CD4-positive, alpha-beta memory T cell (primary cell): ENCODE measurements at regions of chr9 and their contacts with region 1.

Region 1: DNA sequence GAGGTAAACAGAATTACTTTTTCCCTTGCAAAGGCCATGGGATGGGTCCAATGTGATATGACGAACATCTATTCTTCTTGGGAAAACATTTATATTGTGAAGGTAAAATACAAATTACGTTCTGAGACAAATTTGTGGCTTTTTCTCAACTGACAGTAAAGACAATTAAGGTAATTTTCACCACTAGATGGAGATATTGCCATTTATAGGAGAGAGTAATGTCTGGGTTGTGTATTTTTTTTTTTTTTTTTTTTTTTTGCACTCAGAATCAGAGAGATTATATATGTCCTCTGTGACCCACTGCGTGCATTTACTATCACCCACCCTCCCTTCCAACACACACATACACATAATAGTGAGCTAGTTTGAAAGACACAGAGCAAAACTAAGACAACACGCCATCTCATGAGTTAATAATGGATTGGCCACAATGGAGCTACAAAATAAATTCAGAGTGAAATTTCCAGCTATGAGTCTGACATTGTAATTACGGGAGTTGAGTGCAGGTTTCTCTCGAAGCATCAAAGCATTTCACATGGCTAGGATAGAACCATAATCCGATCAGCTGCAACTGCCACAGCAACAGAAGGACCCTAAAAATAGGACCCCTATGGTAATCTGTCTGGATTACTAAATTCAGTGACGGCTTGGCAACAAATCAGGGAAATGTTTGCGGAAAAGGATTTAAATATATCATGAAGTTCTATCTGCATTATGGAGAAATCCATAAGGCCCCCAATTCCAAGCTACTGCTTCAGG is 49.2 kb downstream of the ANXA1 start:
- DNase-seq: peak; percentile 15 to 40 (median 28)
- H3K4me3 ChIP-seq: no peak overlapping the region
- H3K4me3 Mint-ChIP-seq: no peak overlapping the region
- H3K27ac ChIP-seq: no peak overlapping the region
- H3K27ac Mint-ChIP-seq: peak overlapping the region in 1 of 7 donors; percentile 82
- H3K4me1 ChIP-seq: no peaks in the 10 kb centered on the region
- H3K4me1 Mint-ChIP-seq: peaks cover 0 to 2% (median 0%) of the 10 kb centered on the region in 4 donors
- H3K27me3 ChIP-seq: no peaks in the 10 kb centered on the region
- H3K27me3 Mint-ChIP-seq: peaks cover 5 to 17% of the 10 kb centered on the region in 2 donors

Region 2: DNA sequence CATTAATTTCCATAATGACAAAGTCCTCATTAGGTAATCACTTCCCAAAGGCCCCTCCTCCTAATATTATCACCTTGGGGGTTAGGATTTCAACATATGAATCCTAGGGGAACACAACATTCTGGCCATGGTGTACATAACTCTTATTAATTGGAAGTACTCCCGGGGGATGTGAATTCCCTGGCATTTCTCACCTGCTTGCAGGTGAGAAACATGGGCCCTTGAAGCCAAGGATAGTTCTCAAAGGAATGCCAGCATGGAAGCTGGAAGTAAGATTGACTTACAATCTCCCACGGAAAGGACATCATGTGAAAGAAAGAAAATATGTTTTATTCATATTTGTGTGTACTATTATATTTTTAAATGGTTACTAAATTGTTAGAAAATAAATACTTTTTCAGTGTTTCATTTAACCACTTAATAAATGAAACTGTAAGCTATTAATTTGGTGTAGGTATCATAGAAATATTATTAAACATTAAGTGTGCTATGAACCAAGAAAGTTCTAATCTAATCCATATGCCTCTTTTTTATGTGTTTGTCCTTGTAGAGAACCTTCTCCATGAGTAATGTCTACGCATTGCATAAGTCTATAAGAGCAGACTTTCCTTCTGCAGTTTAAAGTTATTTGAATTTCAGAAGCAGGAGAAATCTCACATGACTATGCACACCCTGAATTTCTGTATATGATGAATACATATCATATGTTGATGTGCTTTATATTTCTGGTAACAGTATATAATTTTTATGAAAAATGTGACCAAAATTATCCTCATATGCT is 10.2 kb after region 1 on chr9:
- CTCF ChIA-PET with region 1: interaction called, 10 read pairs
- POLR2A ChIA-PET with region 1: no interaction called
- intact Hi-C with region 1: no loop called
- DNase-seq: no peak
- H3K4me3 ChIP-seq: no peak overlapping the region
- H3K4me3 Mint-ChIP-seq: no peak overlapping the region
- H3K27ac ChIP-seq: no peak overlapping the region
- H3K27ac Mint-ChIP-seq: no peak overlapping the region
- H3K4me1 ChIP-seq: no peaks in the 10 kb centered on the region
- H3K4me1 Mint-ChIP-seq: no peaks in the 10 kb centered on the region
- H3K27me3 ChIP-seq: no peaks in the 10 kb centered on the region
- H3K27me3 Mint-ChIP-seq: peaks cover 3 to 5% of the 10 kb centered on the region in 2 donors

Region 3: GRCh38 chr9:73853547-73853946 is 652.7 kb after region 1 on chr9:
- CTCF ChIA-PET with region 1: no interaction called
- POLR2A ChIA-PET with region 1: no interaction called
- intact Hi-C with region 1: no loop called
- DNase-seq: no peak
- H3K4me3 ChIP-seq: no peak overlapping the region
- H3K4me3 Mint-ChIP-seq: no peak overlapping the region
- H3K27ac ChIP-seq: no peak overlapping the region
- H3K27ac Mint-ChIP-seq: no peak overlapping the region
- H3K4me1 ChIP-seq: no peaks in the 10 kb centered on the region
- H3K4me1 Mint-ChIP-seq: no peaks in the 10 kb centered on the region
- H3K27me3 ChIP-seq: no peaks in the 10 kb centered on the region
- H3K27me3 Mint-ChIP-seq: no peaks in the 10 kb centered on the region

Region 4: GRCh38 chr9:74645007-74645639 is 1444.2 kb after region 1 on chr9:
- CTCF ChIA-PET with region 1: interaction called, 6 read pairs
- POLR2A ChIA-PET with region 1: no interaction called
- intact Hi-C with region 1: loop called (anchors 10 kb)
- DNase-seq: no peak
- H3K4me3 ChIP-seq: no peak overlapping the region
- H3K4me3 Mint-ChIP-seq: no peak overlapping the region
- H3K27ac ChIP-seq: no peak overlapping the region
- H3K27ac Mint-ChIP-seq: no peak overlapping the region
- H3K4me1 ChIP-seq: no peaks in the 10 kb centered on the region
- H3K4me1 Mint-ChIP-seq: no peaks in the 10 kb centered on the region
- H3K27me3 ChIP-seq: no peaks in the 10 kb centered on the region
- H3K27me3 Mint-ChIP-seq: peaks cover 0 to 3% of the 10 kb centered on the region in 2 donors

Region 5: DNA sequence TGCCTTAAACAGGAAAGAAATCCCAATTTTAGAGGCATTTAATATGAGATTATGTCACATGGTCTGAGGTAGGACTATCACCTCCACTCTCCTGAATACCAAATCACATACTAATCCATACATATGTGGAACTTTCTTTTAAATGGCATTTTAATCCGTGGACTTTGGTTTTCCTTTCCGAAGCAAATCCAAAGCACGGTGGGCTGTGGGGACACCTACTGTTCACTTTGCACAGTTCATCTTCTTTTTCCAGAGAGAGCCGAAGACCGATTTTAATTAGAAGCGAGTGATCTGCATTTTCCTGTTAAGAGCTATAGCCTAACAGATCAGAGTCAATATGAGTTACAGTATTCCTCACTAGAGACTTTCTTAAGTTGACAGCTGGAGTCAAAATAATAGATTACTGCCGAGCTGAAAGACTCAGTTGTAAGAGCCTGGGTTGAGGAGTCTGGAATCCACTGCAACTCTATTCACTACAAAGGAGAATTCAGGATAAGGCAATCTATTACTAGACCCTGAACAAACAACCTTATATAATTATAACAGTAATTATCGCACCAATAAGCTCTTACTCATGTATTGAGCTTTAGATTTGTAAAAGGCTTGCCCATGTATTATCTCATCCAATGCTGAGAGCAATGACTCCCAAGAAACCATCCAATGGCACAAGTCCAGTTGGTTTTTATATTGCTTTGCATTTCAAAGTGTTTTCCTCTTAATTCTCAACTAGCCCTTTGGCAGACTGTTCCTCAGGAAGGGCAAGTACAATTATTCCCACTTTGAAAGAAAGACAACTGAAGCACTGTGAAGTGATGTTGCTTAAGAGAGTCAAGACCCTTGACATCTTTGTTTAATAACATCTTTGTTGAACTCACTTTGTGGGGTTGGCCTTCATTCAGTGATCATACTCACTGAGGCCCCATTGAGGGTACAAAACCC is 1542.2 kb after region 1 on chr9:
- CTCF ChIA-PET with region 1: no interaction called
- POLR2A ChIA-PET with region 1: no interaction called
- intact Hi-C with region 1: loop called (anchors 2 kb)
- DNase-seq: no peak
- H3K4me3 ChIP-seq: no peak overlapping the region
- H3K4me3 Mint-ChIP-seq: no peak overlapping the region
- H3K27ac ChIP-seq: no peak overlapping the region
- H3K27ac Mint-ChIP-seq: no peak overlapping the region
- H3K4me1 ChIP-seq: no peaks in the 10 kb centered on the region
- H3K4me1 Mint-ChIP-seq: peaks cover 0 to 3% (median 0%) of the 10 kb centered on the region in 4 donors
- H3K27me3 ChIP-seq: no peaks in the 10 kb centered on the region
- H3K27me3 Mint-ChIP-seq: peaks cover 10 to 18% of the 10 kb centered on the region in 2 donors